Natural killer cell (primary cell): ENCODE measurements at regions of chr1 and their contacts with region 1.

Region 1: DNA sequence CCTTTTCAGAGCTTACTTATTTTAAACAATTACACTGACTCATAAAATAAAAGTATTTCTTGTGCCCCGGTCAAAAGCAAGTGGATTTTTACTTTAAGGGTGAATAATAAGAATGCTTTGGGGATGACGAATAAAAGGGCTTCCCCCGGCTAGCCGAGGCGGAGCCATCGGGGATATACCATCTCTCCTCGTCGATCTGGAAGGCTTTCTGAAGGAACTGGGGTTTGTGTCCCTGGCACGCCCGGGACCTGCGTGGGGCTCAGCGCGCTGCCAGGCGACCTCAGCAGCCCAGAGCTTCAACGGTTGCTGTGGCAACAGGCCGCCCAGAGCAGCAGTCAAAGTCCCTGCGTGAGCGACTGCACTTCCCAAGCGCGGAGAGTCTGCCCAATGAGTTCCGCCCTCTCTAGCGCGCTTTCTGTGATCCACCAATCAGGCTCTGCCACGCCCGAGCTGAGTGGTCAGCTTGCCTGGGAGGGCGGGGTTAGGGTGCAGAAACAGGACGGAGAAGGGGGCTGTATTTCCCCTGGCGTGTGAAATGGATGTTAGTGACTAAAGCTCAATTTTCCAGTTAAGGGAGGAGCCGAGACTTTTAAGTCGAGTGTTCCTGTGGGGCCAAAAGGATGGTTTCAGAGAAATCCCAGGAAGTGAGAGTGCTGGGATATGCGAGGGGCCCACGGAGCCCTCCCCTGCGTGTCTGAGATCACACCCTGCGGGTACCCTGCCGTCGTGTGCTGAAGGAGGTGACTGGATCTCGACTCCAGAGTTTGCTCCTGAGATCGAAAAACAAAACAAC is 33.0 kb upstream of the MGST3 start:
- DNase-seq: peak; percentile 91 to 94
- ATAC-seq: peak; percentile 95 to 98 (median 98)
- H3K4me3 ChIP-seq: peak overlapping the region; percentile 39
- H3K4me3 Mint-ChIP-seq: peak overlapping the region; percentile 88
- H3K27ac ChIP-seq: peak overlapping the region; percentile 33
- H3K27ac Mint-ChIP-seq: peak overlapping the region; percentile 76 to 96
- H3K4me1 ChIP-seq: peaks cover 13% of the 10 kb centered on the region
- H3K4me1 Mint-ChIP-seq: peaks cover 21 to 31% of the 10 kb centered on the region in 2 donors
- H3K27me3 ChIP-seq: peaks cover 15% of the 10 kb centered on the region
- H3K27me3 Mint-ChIP-seq: peaks cover 19 to 38% of the 10 kb centered on the region in 2 donors
- CTCF ChIP-seq: no peak

Region 2: GRCh38 chr1:165144757-165145397 is 453.2 kb before region 1 on chr1:
- intact Hi-C with region 1: loop called (anchors 10 kb)
- DNase-seq: peak in 1 of 2 donors; percentile 31
- ATAC-seq: no peak
- H3K4me3 ChIP-seq: no peak overlapping the region
- H3K4me3 Mint-ChIP-seq: no peak overlapping the region
- H3K27ac ChIP-seq: no peak overlapping the region
- H3K27ac Mint-ChIP-seq: no peak overlapping the region
- H3K4me1 ChIP-seq: no peaks in the 10 kb centered on the region
- H3K4me1 Mint-ChIP-seq: no peaks in the 10 kb centered on the region
- H3K27me3 ChIP-seq: no peaks in the 10 kb centered on the region
- H3K27me3 Mint-ChIP-seq: peaks cover 4 to 7% of the 10 kb centered on the region in 2 donors
- CTCF ChIP-seq: peak; percentile 46

Region 3: DNA sequence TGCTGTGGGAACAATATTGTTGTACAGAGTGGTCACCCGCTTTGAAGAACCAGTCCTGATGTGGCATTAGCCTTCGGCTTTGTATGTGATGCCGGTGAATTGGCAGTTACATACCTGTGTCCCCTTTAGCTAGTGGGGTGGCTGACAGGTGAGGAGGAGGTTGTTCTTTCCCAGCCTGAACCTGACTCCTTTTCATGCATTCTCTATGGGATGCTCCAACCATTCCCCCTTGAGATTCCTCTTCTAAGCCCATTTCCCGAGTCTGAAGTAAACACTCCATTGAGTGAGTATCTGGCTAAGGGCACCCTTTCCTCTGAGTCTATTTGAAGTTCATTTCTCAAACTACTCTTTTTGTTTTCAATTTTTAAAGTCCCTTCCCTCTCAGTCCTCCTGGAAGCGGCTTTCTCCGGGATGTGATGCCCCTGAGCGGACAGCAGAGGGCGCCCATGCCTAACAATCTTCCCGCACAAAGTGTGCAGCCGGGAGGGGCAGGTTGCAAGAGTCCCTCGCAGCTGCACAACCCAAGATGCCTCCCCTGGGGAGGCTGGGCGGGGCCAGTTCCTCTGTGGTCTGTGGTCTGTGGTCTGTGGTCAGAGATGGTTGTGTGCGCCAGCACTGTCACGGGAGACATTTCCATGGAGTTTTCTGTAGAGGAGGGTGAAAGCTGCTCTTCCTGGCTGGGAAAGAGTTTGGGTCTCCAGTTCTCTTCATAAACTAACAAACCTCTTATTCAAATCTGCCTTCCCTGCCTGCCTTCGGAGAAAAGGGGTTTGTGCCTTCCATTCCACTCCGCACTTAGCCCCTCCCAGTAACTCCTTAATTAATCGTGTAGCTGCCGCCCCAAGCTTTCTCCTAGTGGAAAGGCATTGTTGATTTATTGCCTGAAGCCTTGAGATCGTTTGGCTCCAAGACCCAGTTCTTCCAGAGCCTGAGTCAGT is 205.2 kb before region 1 on chr1:
- intact Hi-C with region 1: loop called (anchors 1 kb)
- DNase-seq: peak; percentile 79 to 96
- ATAC-seq: peak; percentile 96 to 99 (median 99)
- H3K4me3 ChIP-seq: no peak overlapping the region
- H3K4me3 Mint-ChIP-seq: peak overlapping the region; percentile 62
- H3K27ac ChIP-seq: no peak overlapping the region
- H3K27ac Mint-ChIP-seq: peak overlapping the region; percentile 70 to 82
- H3K4me1 ChIP-seq: peaks cover 14% of the 10 kb centered on the region
- H3K4me1 Mint-ChIP-seq: peaks cover 13 to 18% of the 10 kb centered on the region in 2 donors
- H3K27me3 ChIP-seq: peaks cover 24% of the 10 kb centered on the region
- H3K27me3 Mint-ChIP-seq: peaks cover 21 to 78% of the 10 kb centered on the region in 2 donors
- CTCF ChIP-seq: peak; percentile 82

Region 4: GRCh38 chr1:165403835-165404482 is 194.1 kb before region 1 on chr1:
- intact Hi-C with region 1: no loop called
- DNase-seq: peak in 1 of 2 donors; percentile 56
- ATAC-seq: peak in 2 of 3 donors; percentile 46 to 49
- H3K4me3 ChIP-seq: no peak overlapping the region
- H3K4me3 Mint-ChIP-seq: no peak overlapping the region
- H3K27ac ChIP-seq: no peak overlapping the region
- H3K27ac Mint-ChIP-seq: no peak overlapping the region
- H3K4me1 ChIP-seq: no peaks in the 10 kb centered on the region
- H3K4me1 Mint-ChIP-seq: no peaks in the 10 kb centered on the region
- H3K27me3 ChIP-seq: peaks cover 2% of the 10 kb centered on the region
- H3K27me3 Mint-ChIP-seq: peaks cover 12 to 25% of the 10 kb centered on the region in 2 donors
- CTCF ChIP-seq: peak; percentile 32

Region 5: GRCh38 chr1:165467706-165468105 is 130.4 kb before region 1 on chr1:
- intact Hi-C with region 1: no loop called
- DNase-seq: no peak
- ATAC-seq: no peak
- H3K4me3 ChIP-seq: no peak overlapping the region
- H3K4me3 Mint-ChIP-seq: no peak overlapping the region
- H3K27ac ChIP-seq: no peak overlapping the region
- H3K27ac Mint-ChIP-seq: no peak overlapping the region
- H3K4me1 ChIP-seq: no peaks in the 10 kb centered on the region
- H3K4me1 Mint-ChIP-seq: no peaks in the 10 kb centered on the region
- H3K27me3 ChIP-seq: peaks cover 2% of the 10 kb centered on the region
- H3K27me3 Mint-ChIP-seq: peaks cover 10 to 22% of the 10 kb centered on the region in 2 donors
- CTCF ChIP-seq: no peak

Region 6: DNA sequence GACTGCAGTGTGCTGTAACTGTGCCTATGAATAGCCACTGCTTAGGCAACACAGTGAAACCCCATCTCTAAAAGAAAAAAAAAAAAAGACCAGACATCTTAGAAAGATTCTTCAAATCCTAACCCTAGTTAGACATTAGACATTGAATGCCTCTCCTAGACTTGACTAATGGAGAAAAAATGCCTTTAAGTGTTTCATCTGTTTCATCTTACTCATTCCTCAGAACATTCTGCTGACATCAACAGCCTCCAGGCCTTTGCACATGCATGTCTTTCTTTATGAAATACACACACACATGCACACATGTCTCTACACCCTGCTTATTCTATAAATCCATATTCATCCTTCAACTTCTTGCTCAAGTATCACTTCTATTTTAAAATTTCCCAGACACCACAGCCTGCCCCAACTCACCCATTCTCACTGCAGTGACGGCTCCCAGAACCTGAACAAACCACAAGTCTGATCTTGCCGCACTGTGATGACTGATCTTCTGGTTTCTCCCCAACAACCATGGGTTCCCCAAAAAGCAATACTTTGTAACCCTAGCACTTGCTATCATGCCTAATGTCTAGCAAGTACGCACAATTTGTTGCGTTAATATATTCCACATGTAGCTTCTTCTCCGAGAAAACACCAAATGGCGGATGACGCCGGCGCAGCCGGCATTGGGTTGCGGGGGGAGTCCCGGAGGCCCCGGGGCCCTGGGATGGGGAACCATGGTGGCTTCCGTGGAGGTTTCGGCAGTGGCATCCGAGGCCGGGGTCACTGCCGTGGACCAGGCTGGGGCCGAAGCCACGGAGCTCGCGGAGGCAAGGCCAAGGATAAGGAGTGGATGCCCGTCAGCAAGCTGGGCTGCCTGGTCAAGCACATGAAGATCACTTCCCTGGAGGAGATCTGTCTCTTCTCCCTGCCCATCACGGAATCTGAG is 16.9 kb before region 1 on chr1:
- intact Hi-C with region 1: no loop called
- DNase-seq: no peak
- ATAC-seq: no peak
- H3K4me3 ChIP-seq: no peak overlapping the region
- H3K4me3 Mint-ChIP-seq: no peak overlapping the region
- H3K27ac ChIP-seq: no peak overlapping the region
- H3K27ac Mint-ChIP-seq: no peak overlapping the region
- H3K4me1 ChIP-seq: no peaks in the 10 kb centered on the region
- H3K4me1 Mint-ChIP-seq: no peaks in the 10 kb centered on the region
- H3K27me3 ChIP-seq: peaks cover 5% of the 10 kb centered on the region
- H3K27me3 Mint-ChIP-seq: peaks cover 19 to 38% of the 10 kb centered on the region in 2 donors
- CTCF ChIP-seq: no peak

Region 7: DNA sequence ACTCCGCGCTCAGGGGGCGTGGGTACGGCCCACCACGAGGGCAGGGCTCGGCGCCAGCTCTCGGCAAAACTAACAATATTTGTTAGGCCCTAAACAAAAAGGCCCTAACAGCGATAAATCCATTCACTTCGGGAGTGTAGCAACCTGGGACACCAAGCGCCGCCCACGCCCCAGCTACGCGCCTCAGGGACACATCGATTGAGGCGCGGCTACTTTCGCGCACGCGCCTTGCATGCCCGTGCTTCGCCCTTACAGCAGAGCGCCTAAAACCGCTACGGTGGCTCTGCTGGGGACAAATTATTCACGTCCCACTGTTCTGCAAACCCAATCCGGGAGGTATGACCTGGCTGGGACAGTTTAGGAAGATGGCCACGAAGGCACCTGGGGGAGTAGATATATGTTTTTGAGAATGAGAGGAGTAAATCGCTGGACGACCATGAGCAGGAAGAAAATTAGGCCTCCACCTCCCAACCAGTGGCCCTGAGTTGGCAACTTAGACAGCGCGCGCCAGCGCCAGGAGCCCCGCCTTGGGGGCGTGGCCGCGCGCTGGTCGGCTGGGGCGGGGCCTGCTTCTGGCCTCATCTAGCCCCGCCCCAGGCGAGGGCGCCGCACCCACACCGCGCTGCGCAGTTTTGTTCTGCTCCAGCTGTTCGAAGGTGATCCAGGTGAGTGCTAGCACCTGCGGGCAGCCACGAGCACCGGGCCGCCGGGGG is 32.7 kb after region 1 on chr1 and contains the start of gene MGST3:
- intact Hi-C with region 1: loop called (anchors 1 kb)
- DNase-seq: peak; percentile 90 to 96
- ATAC-seq: peak; percentile 94 to 99 (median 96)
- H3K4me3 ChIP-seq: peak within 1 kb of the TSS; percentile 64
- H3K4me3 Mint-ChIP-seq: no peak within 1 kb of the TSS
- H3K27ac ChIP-seq: peak within 1 kb of the TSS; percentile 89
- H3K27ac Mint-ChIP-seq: no peak within 1 kb of the TSS
- H3K4me1 ChIP-seq: peaks cover 20% of the 10 kb centered on the region
- H3K4me1 Mint-ChIP-seq: peaks cover 0 to 19% of the 10 kb centered on the region in 2 donors
- H3K27me3 ChIP-seq: no peaks in the 10 kb centered on the region
- H3K27me3 Mint-ChIP-seq: no peaks in the 10 kb centered on the region
- CTCF ChIP-seq: no peak
- total RNA-seq, gene MGST3: 27.2 to 34.3 (median 29.0) TPM

Region 8: GRCh38 chr1:165697881-165698760 is 100.0 kb after region 1 on chr1 and contains the start of gene ALDH9A1:
- intact Hi-C with region 1: loop called (anchors 1 kb)
- DNase-seq: peak; percentile 81 to 87
- ATAC-seq: peak; percentile 88 to 95 (median 90)
- H3K4me3 ChIP-seq: peak within 1 kb of the TSS; percentile 70
- H3K4me3 Mint-ChIP-seq: peak within 1 kb of the TSS; percentile 93
- H3K27ac ChIP-seq: peak within 1 kb of the TSS; percentile 84
- H3K27ac Mint-ChIP-seq: peak within 1 kb of the TSS; percentile 97 to 100
- H3K4me1 ChIP-seq: peaks cover 10% of the 10 kb centered on the region
- H3K4me1 Mint-ChIP-seq: peaks cover 21 to 25% of the 10 kb centered on the region in 2 donors
- H3K27me3 ChIP-seq: no peaks in the 10 kb centered on the region
- H3K27me3 Mint-ChIP-seq: no peaks in the 10 kb centered on the region
- CTCF ChIP-seq: no peak
- total RNA-seq, gene ALDH9A1: 38.0 to 57.1 (median 50.3) TPM

Region 9: GRCh38 chr1:165914136-165914798 is 316.2 kb after region 1 on chr1:
- intact Hi-C with region 1: loop called (anchors 1 kb)
- DNase-seq: peak; percentile 44 to 87
- ATAC-seq: peak; percentile 85 to 99 (median 95)
- H3K4me3 ChIP-seq: no peak overlapping the region
- H3K4me3 Mint-ChIP-seq: no peak overlapping the region
- H3K27ac ChIP-seq: no peak overlapping the region
- H3K27ac Mint-ChIP-seq: no peak overlapping the region
- H3K4me1 ChIP-seq: no peaks in the 10 kb centered on the region
- H3K4me1 Mint-ChIP-seq: peaks cover 4 to 5% of the 10 kb centered on the region in 2 donors
- H3K27me3 ChIP-seq: no peaks in the 10 kb centered on the region
- H3K27me3 Mint-ChIP-seq: no peaks in the 10 kb centered on the region
- CTCF ChIP-seq: peak; percentile 81